Mammary epithelial cell (primary cell): ENCODE measurements at regions of chr18 and their contacts with region 1.

Region 1: DNA sequence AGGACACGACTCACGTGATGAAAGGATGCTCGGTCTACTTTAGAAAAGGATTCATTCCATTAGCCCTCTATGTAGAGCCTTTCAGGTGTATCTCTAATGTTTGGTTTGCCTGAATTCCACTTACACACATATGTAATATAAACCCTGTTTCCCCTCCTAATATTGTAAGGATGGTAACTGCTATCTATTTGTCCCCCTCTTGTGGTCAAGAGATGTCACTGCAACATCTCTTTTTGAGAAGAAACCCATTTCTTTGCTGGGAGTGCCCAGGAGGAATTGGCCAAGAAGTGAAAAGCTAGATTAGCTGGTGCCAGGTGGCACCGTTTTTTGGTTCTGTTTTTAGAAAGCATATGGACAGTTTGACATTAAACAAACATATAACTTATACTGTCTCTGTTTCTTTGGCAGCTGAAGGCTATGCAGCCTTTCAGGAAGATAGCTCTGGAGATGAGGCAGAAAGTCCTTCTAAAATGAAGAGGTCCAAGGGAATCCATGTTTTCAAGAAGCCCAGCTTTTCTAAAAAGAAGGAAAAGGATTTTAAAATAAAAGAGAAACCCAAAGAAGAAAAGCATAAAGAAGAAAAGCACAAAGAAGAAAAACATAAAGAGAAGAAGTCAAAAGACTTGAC is 41.2 kb downstream of the RALBP1 start:
- DNase-seq: peak; percentile 33
- H3K4me3 ChIP-seq: no peak overlapping the region
- H3K27ac ChIP-seq: no peak overlapping the region
- H3K4me1 ChIP-seq: peaks cover 5% of the 10 kb centered on the region
- H3K27me3 ChIP-seq: no peaks in the 10 kb centered on the region
- CTCF ChIP-seq: peak; percentile 83 to 95

Region 2: GRCh38 chr18:8654503-8655451 is 861.8 kb before region 1 on chr18:
- CTCF ChIA-PET with region 1: no interaction called
- dilution Hi-C with region 1: no loop called
- in situ Hi-C with region 1: loop called in 1 of 2 experiments (anchors 25 kb)
- intact Hi-C with region 1: loop called (anchors 5 kb)
- DNase-seq: no peak
- H3K4me3 ChIP-seq: no peak overlapping the region
- H3K27ac ChIP-seq: no peak overlapping the region
- H3K4me1 ChIP-seq: peaks cover 11% of the 10 kb centered on the region
- H3K27me3 ChIP-seq: no peaks in the 10 kb centered on the region
- CTCF ChIP-seq: peak; percentile 69 to 71

Region 3: GRCh38 chr18:9334329-9334972 is 182.1 kb before region 1 on chr18 and contains the start of gene TWSG1:
- CTCF ChIA-PET with region 1: no interaction called
- dilution Hi-C with region 1: no loop called
- in situ Hi-C with region 1: no loop called
- intact Hi-C with region 1: loop called (anchors 2 kb)
- DNase-seq: peak; percentile 91
- H3K4me3 ChIP-seq: peak within 1 kb of the TSS; percentile 64 to 76 (median 65)
- H3K27ac ChIP-seq: peak within 1 kb of the TSS; percentile 63
- H3K4me1 ChIP-seq: peaks cover 10% of the 10 kb centered on the region
- H3K27me3 ChIP-seq: no peaks in the 10 kb centered on the region
- CTCF ChIP-seq: peak in 1 of 2 donors; percentile 55
- total RNA-seq, gene TWSG1: 41.0 to 63.8 TPM

Region 4: GRCh38 chr18:9366192-9366591 is 150.4 kb before region 1 on chr18:
- CTCF ChIA-PET with region 1: interaction called, 4 read pairs
- dilution Hi-C with region 1: no loop called
- in situ Hi-C with region 1: no loop called
- intact Hi-C with region 1: loop called (anchors 1 kb)
- DNase-seq: peak; percentile 84
- H3K4me3 ChIP-seq: no peak overlapping the region
- H3K27ac ChIP-seq: no peak overlapping the region
- H3K4me1 ChIP-seq: peaks cover 10% of the 10 kb centered on the region
- H3K27me3 ChIP-seq: no peaks in the 10 kb centered on the region
- CTCF ChIP-seq: peak; percentile 45 to 69

Region 5: GRCh38 chr18:9392726-9393125 is 123.8 kb before region 1 on chr18:
- CTCF ChIA-PET with region 1: no interaction called
- dilution Hi-C with region 1: no loop called
- in situ Hi-C with region 1: no loop called
- intact Hi-C with region 1: loop called (anchors 1 kb)
- DNase-seq: no peak
- H3K4me3 ChIP-seq: no peak overlapping the region
- H3K27ac ChIP-seq: no peak overlapping the region
- H3K4me1 ChIP-seq: no peaks in the 10 kb centered on the region
- H3K27me3 ChIP-seq: no peaks in the 10 kb centered on the region
- CTCF ChIP-seq: peak in 1 of 2 donors; percentile 42

Region 6: DNA sequence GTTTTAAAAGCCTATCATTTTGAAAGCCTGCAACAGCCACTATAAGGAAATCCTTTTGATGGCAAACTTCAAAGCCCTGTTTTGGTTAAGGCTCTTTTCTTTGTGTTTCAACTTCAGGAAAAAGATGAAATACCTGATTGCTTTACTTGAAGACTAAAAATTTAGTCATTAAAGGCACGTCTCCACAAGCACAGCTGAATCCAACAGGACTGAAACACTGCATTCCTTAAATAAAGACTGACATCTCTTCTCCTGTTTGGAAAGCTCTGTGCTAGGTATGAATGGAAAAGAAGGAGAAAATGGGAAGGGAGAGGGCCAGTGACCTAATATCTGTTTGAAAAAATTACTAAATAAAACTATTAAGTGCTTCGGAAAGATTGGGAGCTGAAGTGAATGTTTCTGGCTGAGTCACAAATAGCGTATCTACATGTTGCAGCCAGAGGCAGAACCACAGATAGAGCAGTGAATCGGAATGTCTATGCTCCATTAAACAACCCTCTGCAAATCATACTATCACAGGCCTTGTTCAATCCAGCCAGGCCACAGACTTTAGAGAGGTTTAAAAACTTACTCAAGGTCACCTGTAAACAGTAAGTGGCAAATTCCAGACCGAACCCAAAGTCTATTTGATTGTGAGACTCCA is 62.4 kb before region 1 on chr18:
- CTCF ChIA-PET with region 1: interaction called, 4 read pairs
- dilution Hi-C with region 1: loop called (anchors 5 kb)
- in situ Hi-C with region 1: no loop called
- intact Hi-C with region 1: no loop called
- DNase-seq: peak; percentile 59
- H3K4me3 ChIP-seq: no peak overlapping the region
- H3K27ac ChIP-seq: peak overlapping the region; percentile 27
- H3K4me1 ChIP-seq: peaks cover 12% of the 10 kb centered on the region
- H3K27me3 ChIP-seq: no peaks in the 10 kb centered on the region
- CTCF ChIP-seq: no peak

Region 7: GRCh38 chr18:9474983-9475642 is 41.4 kb before region 1 on chr18 and contains the start of gene RALBP1:
- CTCF ChIA-PET with region 1: no interaction called
- dilution Hi-C with region 1: no loop called
- in situ Hi-C with region 1: no loop called
- intact Hi-C with region 1: loop called (anchors 5 kb)
- DNase-seq: peak; percentile 100
- H3K4me3 ChIP-seq: peak within 1 kb of the TSS; percentile 67 to 98 (median 93)
- H3K27ac ChIP-seq: peak within 1 kb of the TSS; percentile 91
- H3K4me1 ChIP-seq: peaks cover 13% of the 10 kb centered on the region
- H3K27me3 ChIP-seq: no peaks in the 10 kb centered on the region
- CTCF ChIP-seq: peak in 1 of 2 donors; percentile 30
- total RNA-seq, gene RALBP1: 59.1 to 72.2 TPM

Region 8: GRCh38 chr18:10121786-10122542 is 605.4 kb after region 1 on chr18:
- CTCF ChIA-PET with region 1: no interaction called
- dilution Hi-C with region 1: no loop called
- in situ Hi-C with region 1: no loop called
- intact Hi-C with region 1: no loop called
- DNase-seq: no peak
- H3K4me3 ChIP-seq: no peak overlapping the region
- H3K27ac ChIP-seq: no peak overlapping the region
- H3K4me1 ChIP-seq: peaks cover 3% of the 10 kb centered on the region
- H3K27me3 ChIP-seq: no peaks in the 10 kb centered on the region
- CTCF ChIP-seq: no peak